IMR-90 (cell line): ENCODE measurements at regions of chr10 and their contacts with region 1.

Region 1: DNA sequence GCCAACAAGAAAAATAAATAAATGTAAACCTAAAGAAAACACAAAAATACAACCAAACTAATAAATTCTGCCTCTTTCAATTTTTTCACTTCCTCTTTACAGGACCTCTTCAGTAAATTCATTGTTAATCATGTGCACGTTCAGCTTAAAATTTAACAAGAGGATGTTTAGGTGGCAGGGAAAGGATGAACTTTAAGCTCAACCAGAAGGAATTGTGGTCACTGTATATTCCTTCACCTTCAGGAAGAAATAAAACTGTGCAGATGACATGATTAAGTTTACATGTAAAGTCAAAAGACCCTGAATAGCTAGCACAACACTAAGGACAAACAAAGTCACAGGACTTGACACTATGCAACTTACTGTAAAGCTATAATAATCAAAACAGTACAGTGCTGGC is 33.0 kb downstream of the KIF5B start:
- DNase-seq: no peak
- ATAC-seq: no peak
- H3K4me3 ChIP-seq: no peak overlapping the region
- H3K27ac ChIP-seq: no peak overlapping the region
- H3K4me1 ChIP-seq: no peaks in the 10 kb centered on the region
- H3K27me3 ChIP-seq: no peaks in the 10 kb centered on the region
- CTCF ChIP-seq: no peak
- POLR2A ChIP-seq: no peak
- RAD21 ChIP-seq: no peak

Region 2: DNA sequence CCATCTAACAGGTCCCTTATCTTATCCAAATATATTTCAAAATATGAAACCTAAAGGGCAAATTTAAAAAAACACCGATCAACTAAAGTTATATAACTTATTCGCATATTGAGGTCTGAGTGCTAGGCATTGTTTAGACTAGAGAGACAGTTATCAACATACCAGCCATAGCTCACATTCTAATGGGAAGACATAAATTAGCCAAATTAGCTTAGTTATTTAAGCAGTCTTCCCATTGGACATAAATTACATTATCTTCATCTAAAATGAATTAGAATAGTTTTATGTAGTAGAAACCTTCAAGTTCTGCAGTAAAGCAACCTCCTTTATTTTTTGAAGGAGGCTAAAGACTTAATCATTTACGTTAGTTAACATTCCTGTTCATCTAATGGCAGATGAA is 15.5 kb after region 1 on chr10:
- CTCF ChIA-PET with region 1: no interaction called
- POLR2A ChIA-PET with region 1: no interaction called
- dilution Hi-C with region 1: no loop called
- in situ Hi-C with region 1: no loop called
- intact Hi-C with region 1: loop called (anchors 2 kb)
- DNase-seq: peak; percentile 11
- ATAC-seq: no peak
- H3K4me3 ChIP-seq: no peak overlapping the region
- H3K27ac ChIP-seq: no peak overlapping the region
- H3K4me1 ChIP-seq: peaks cover 10% of the 10 kb centered on the region; the same call in 1 of the 2 replicates
- H3K27me3 ChIP-seq: no peaks in the 10 kb centered on the region
- CTCF ChIP-seq: no peak
- POLR2A ChIP-seq: no peak
- RAD21 ChIP-seq: no peak

Region 3: DNA sequence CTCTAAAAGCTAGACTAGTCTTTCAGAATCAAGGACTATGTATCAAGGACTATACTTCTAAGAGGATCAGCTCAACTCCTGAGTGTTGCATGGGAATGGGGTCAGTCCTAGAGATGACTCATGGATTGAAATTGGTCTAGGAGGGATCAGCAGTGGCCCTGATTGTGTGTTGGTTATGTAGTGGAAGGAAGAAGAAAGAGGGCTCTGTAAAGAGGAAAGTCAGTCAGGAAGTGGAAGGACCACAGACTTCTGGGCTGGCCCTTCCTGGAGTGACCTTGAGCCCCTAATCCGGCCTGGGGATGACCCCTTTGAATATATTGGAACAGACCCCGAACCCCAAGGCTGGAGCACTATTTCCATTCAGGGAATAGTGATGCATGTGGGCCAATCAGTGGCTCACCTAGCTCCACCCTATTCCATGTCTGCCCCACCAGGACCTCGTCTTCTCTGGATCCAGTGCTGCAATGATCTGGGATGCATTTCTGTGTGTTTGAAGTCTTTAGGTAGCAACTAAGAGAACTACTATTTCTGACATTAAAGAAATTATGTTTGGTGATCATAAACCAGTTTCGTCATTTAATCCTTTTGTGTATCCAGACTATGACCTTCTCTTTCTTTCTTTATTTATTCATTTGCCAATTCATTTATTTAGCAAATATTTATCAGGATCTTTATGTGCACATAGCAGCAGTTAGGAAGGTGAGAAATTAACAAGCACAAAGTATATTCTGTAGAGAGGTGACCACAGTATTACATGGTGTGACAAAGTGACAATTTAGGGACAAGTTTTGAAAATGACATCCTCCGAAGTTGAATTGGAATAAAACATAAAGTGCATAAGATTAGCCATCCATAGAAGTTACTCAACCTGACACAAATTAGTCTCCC is 81.6 kb after region 1 on chr10:
- CTCF ChIA-PET with region 1: no interaction called
- POLR2A ChIA-PET with region 1: no interaction called
- dilution Hi-C with region 1: no loop called
- in situ Hi-C with region 1: no loop called
- intact Hi-C with region 1: no loop called
- DNase-seq: peak; percentile 16
- ATAC-seq: no peak
- H3K4me3 ChIP-seq: no peak overlapping the region
- H3K27ac ChIP-seq: no peak overlapping the region
- H3K4me1 ChIP-seq: no peaks in the 10 kb centered on the region
- H3K27me3 ChIP-seq: peaks cover 5% of the 10 kb centered on the region
- CTCF ChIP-seq: no peak
- POLR2A ChIP-seq: no peak
- RAD21 ChIP-seq: no peak